Heart right ventricle (tissue), 16 donors: ENCODE measurements at regions of chr7 and their contacts with region 1.

Region 1: DNA sequence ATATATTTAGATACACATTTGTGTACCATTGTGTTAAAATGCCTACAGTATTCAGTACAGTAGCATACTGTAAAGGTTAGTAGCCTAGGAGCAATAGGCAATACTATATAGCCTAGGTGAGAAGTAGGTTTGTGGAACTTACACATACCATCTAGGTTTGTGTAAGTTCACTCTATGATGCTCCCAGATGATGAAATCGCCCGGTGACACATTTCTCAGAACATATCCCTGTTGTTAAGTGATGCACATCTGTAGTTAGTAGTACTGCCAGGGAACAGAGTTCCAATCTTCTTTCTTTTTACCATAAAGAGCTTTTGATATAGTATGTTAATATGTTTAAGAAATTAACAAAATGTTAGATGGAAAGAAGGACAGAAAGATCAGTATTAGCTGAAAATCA is 138.2 kb downstream of the SNX13 start:
- DNase-seq: no peak
- ATAC-seq: no peak
- H3K4me3 ChIP-seq: no peak overlapping the region
- H3K27ac ChIP-seq: no peak overlapping the region
- H3K4me1 ChIP-seq: no peaks in the 10 kb centered on the region
- H3K27me3 ChIP-seq: no peaks in the 10 kb centered on the region
- CTCF ChIP-seq: no peak

Region 2: GRCh38 chr7:17745610-17746009 is 56.4 kb before region 1 on chr7:
- intact Hi-C with region 1: no loop called
- DNase-seq: no peak
- ATAC-seq: no peak
- H3K4me3 ChIP-seq: no peak overlapping the region
- H3K27ac ChIP-seq: no peak overlapping the region
- H3K4me1 ChIP-seq: no peaks in the 10 kb centered on the region
- H3K27me3 ChIP-seq: no peaks in the 10 kb centered on the region
- CTCF ChIP-seq: no peak

Region 3: GRCh38 chr7:17769918-17770317 is 32.1 kb before region 1 on chr7:
- intact Hi-C with region 1: no loop called
- DNase-seq: peak in 1 of 2 donors; percentile 58
- ATAC-seq: peak in 6 of 8 donors; percentile 47 to 71 (median 64)
- H3K4me3 ChIP-seq: no peak overlapping the region
- H3K27ac ChIP-seq: no peak overlapping the region
- H3K4me1 ChIP-seq: peaks cover 5 to 42% (median 13%) of the 10 kb centered on the region in 9 donors
- H3K27me3 ChIP-seq: no peaks in the 10 kb centered on the region
- CTCF ChIP-seq: peak; percentile 25 to 79 (median 72)

Region 4: DNA sequence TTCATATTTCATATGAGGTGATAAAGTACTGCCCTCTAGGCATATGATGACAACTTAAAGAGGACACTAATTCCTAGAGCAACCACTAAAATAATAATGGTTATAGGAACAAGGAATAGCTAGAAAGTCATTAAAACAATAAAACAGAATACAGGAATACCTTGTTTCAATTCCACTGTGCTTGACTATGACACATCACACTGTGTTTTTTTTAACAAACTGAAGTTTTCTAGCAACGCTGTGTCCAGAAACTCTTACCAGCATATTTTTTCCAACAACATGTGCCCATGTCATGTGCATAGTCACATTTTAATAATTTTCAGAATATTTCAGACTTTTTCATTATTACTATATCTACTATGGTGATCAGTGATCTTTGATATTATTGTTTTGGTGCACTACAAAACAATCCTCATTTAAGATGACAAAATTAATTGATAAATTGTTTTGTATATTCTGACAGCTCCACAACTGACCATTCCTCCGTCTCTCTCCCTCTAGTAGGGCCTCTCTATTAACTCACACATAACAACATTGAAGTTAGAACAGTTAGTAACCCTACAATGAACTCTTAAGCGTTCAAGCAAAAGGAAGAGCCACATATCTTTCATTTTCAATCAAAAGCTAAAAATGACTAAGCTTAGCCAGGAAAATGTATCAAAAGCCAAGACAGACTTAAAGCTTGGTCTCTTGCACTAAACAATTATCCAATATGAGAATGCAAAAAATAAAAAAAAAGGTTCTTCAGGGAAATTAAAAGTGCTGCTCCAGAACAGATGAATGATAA is 52.4 kb after region 1 on chr7:
- intact Hi-C with region 1: loop called in 1 of 10 experiments (anchors 10 kb)
- DNase-seq: no peak
- ATAC-seq: no peak
- H3K4me3 ChIP-seq: no peak overlapping the region
- H3K27ac ChIP-seq: no peak overlapping the region
- H3K4me1 ChIP-seq: no peaks in the 10 kb centered on the region
- H3K27me3 ChIP-seq: no peaks in the 10 kb centered on the region
- CTCF ChIP-seq: no peak

Region 5: GRCh38 chr7:18040196-18040595 is 238.1 kb after region 1 on chr7:
- intact Hi-C with region 1: no loop called
- DNase-seq: no peak
- ATAC-seq: peak in 1 of 8 donors; percentile 71
- H3K4me3 ChIP-seq: no peak overlapping the region
- H3K27ac ChIP-seq: no peak overlapping the region
- H3K4me1 ChIP-seq: peaks cover 0 to 10% (median 0%) of the 10 kb centered on the region in 9 donors
- H3K27me3 ChIP-seq: no peaks in the 10 kb centered on the region
- CTCF ChIP-seq: no peak